Mammary epithelial cell (primary cell): ENCODE measurements at regions of chr3 and their contacts with region 1.

Region 1: GRCh38 chr3:36700537-36701248 is 63.7 kb downstream of the DCLK3 start:
- DNase-seq: peak; percentile 50
- H3K4me3 ChIP-seq: no peak overlapping the region
- H3K27ac ChIP-seq: no peak overlapping the region
- H3K4me1 ChIP-seq: peaks cover 20% of the 10 kb centered on the region
- H3K27me3 ChIP-seq: no peaks in the 10 kb centered on the region
- CTCF ChIP-seq: peak; percentile 91 to 93

Region 2: DNA sequence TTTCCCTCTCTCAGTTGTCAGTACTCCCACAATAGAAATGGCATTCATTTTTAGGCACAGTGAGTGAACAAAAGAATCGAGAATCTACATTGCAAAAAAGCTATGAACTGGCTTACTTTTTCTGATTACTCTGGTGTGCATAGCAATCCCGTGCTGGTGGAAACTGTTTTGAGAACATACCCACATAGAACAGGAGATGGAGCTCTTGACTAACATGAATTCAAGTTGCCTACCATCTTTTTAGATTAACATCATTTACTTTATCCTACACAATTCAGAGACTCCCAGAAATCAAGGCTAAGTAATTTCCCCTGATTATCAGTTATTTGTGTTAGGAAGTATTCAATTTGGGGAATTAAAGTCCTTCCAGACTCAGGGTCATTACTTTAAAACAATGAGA is 734.8 kb before region 1 on chr3:
- CTCF ChIA-PET with region 1: interaction called, 4 read pairs
- dilution Hi-C with region 1: no loop called
- in situ Hi-C with region 1: loop called (anchors 25 kb)
- intact Hi-C with region 1: loop called (anchors 1 kb)
- DNase-seq: peak; percentile 14
- H3K4me3 ChIP-seq: no peak overlapping the region
- H3K27ac ChIP-seq: no peak overlapping the region
- H3K4me1 ChIP-seq: no peaks in the 10 kb centered on the region
- H3K27me3 ChIP-seq: peaks cover 5% of the 10 kb centered on the region
- CTCF ChIP-seq: peak; percentile 39 to 62

Region 3: GRCh38 chr3:36257158-36257852 is 443.4 kb before region 1 on chr3:
- CTCF ChIA-PET with region 1: no interaction called
- dilution Hi-C with region 1: no loop called
- in situ Hi-C with region 1: loop called in 1 of 2 experiments (anchors 25 kb)
- intact Hi-C with region 1: loop called (anchors 2 kb)
- DNase-seq: no peak
- H3K4me3 ChIP-seq: no peak overlapping the region
- H3K27ac ChIP-seq: no peak overlapping the region
- H3K4me1 ChIP-seq: no peaks in the 10 kb centered on the region
- H3K27me3 ChIP-seq: no peaks in the 10 kb centered on the region
- CTCF ChIP-seq: no peak

Region 4: GRCh38 chr3:36480911-36481648 is 219.6 kb before region 1 on chr3:
- CTCF ChIA-PET with region 1: no interaction called
- dilution Hi-C with region 1: no loop called
- in situ Hi-C with region 1: no loop called
- intact Hi-C with region 1: no loop called
- DNase-seq: no peak
- H3K4me3 ChIP-seq: no peak overlapping the region
- H3K27ac ChIP-seq: no peak overlapping the region
- H3K4me1 ChIP-seq: no peaks in the 10 kb centered on the region
- H3K27me3 ChIP-seq: no peaks in the 10 kb centered on the region
- CTCF ChIP-seq: no peak

Region 5: DNA sequence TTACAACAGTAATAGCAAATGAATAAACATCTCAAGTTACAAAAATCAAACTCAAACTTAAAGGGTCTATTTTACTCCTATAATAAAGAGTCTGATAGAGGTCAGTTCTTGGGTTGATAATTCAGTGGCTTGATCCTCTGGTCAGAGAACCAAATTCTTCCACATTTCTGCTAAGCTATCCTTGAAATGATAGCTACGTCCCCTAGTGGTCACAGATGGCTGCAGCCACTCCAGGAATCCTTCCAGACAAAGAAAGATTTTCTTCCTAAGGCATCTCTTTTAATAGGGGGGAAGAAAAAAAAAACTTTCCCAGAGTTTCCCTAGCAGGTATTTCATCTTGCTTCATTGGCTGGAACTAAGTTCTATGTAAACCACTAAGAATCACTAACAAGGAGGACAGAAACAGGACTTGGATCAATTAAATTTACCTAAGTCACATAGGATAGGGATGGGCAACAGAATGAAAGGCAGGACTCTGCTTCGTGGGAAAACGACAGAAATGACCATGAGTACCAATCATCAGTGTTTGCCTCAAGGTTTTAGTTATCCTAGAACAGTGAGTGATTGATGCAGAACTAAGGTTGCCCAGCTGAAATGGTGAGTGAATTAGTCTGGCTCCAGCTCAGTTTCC is 159.7 kb before region 1 on chr3:
- CTCF ChIA-PET with region 1: no interaction called
- dilution Hi-C with region 1: no loop called
- in situ Hi-C with region 1: no loop called
- intact Hi-C with region 1: loop called (anchors 1 kb)
- DNase-seq: peak; percentile 11
- H3K4me3 ChIP-seq: no peak overlapping the region
- H3K27ac ChIP-seq: no peak overlapping the region
- H3K4me1 ChIP-seq: no peaks in the 10 kb centered on the region
- H3K27me3 ChIP-seq: no peaks in the 10 kb centered on the region
- CTCF ChIP-seq: peak; percentile 97 to 99

Region 6: GRCh38 chr3:36597422-36597821 is 103.3 kb before region 1 on chr3:
- CTCF ChIA-PET with region 1: no interaction called
- dilution Hi-C with region 1: no loop called
- in situ Hi-C with region 1: loop called (anchors 5 to 10 kb)
- intact Hi-C with region 1: loop called (anchors 1 kb)
- DNase-seq: peak; percentile 66
- H3K4me3 ChIP-seq: no peak overlapping the region
- H3K27ac ChIP-seq: no peak overlapping the region
- H3K4me1 ChIP-seq: peaks cover 5% of the 10 kb centered on the region
- H3K27me3 ChIP-seq: no peaks in the 10 kb centered on the region
- CTCF ChIP-seq: no peak

Region 7: DNA sequence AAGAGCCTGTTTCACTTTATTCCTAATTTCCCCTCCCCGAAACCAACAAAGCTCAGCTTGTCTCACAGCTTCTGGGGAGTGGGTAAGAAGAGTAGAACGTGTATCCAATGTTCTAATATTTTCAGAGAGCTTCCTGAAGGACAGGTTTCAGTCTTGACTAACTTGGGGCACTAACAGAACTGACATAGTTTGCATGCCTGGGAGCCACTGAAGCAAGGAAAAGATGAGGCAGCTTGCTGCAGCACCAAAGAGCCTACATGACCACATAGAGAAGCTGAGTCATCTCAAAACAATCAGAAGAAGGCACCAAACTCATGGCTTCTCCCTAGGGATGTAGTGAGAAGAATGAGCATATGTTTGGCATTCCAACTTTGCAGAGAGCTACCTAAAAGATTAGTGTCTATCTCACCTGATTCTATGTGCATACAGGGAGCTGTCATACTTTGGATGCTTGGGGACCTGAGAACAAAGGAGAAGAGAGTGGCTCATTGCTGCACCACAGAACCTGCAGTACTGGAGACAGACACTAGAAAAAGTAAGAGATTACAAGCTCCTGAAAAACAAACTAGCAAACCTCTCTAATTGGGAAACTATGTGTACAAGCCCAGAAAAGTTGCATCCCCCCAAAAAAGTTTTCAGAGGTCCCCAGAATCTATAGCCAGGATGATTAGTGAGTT is 23.2 kb before region 1 on chr3:
- CTCF ChIA-PET with region 1: no interaction called
- dilution Hi-C with region 1: no loop called
- in situ Hi-C with region 1: no loop called
- intact Hi-C with region 1: loop called (anchors 1 kb)
- DNase-seq: peak; percentile 92
- H3K4me3 ChIP-seq: peak overlapping the region in 1 of 3 experiments; percentile 15
- H3K27ac ChIP-seq: peak overlapping the region; percentile 97
- H3K4me1 ChIP-seq: peaks cover 32% of the 10 kb centered on the region
- H3K27me3 ChIP-seq: no peaks in the 10 kb centered on the region
- CTCF ChIP-seq: peak; percentile 4 to 27

Region 8: DNA sequence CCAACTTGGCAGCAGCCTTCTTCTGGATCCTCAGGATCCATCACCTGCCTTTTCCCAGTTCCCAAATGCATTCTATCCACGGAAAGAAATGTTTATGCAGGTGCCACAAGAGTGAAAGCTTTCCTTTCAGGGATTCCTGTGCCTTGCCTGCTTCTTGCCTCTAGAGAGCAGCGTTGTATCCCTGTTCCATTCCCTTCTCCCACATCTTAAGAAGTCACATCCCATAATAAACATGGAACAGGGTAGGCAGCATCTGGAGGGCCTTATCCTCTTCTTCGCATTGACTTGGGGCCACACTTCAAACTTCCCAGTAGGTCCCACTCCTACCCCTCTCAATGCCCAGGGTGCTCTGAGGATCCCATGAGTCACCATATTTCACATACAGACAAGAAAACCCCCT is 136.4 kb after region 1 on chr3:
- CTCF ChIA-PET with region 1: no interaction called
- dilution Hi-C with region 1: no loop called
- in situ Hi-C with region 1: no loop called
- intact Hi-C with region 1: no loop called
- DNase-seq: no peak
- H3K4me3 ChIP-seq: no peak overlapping the region
- H3K27ac ChIP-seq: no peak overlapping the region
- H3K4me1 ChIP-seq: no peaks in the 10 kb centered on the region
- H3K27me3 ChIP-seq: no peaks in the 10 kb centered on the region
- CTCF ChIP-seq: peak; percentile 22 to 45